ENCODE measurements at regions of chr5 and their contacts with region 1.

Region 1: DNA sequence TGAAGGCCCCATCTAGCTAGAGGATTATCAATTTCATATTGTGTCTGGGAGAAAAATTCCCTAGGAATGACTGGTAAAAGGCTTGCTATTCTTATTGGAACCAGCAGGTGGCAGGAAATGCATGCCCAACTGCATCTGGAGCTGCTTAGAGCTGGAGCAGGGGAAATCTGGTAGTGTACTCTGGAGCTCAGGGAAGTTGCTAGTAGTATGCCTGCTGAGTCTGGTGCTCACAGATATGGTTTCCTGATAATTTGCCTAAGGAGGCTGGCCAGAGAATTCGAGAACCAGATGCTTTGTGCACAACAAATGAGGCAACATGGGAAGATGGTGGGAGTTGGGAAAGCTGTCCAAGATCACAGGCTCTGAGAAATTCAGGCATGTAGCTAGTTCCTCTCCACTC is 53.7 kb downstream of the G3BP1 start:
- DNase-seq: peak; percentile 50
- ATAC-seq: no peak
- H3K4me3 Mint-ChIP-seq: no peak overlapping the region
- H3K27ac Mint-ChIP-seq: no peak overlapping the region
- H3K4me1 Mint-ChIP-seq: no peaks in the 10 kb centered on the region
- H3K27me3 Mint-ChIP-seq: no peaks in the 10 kb centered on the region

Region 2: DNA sequence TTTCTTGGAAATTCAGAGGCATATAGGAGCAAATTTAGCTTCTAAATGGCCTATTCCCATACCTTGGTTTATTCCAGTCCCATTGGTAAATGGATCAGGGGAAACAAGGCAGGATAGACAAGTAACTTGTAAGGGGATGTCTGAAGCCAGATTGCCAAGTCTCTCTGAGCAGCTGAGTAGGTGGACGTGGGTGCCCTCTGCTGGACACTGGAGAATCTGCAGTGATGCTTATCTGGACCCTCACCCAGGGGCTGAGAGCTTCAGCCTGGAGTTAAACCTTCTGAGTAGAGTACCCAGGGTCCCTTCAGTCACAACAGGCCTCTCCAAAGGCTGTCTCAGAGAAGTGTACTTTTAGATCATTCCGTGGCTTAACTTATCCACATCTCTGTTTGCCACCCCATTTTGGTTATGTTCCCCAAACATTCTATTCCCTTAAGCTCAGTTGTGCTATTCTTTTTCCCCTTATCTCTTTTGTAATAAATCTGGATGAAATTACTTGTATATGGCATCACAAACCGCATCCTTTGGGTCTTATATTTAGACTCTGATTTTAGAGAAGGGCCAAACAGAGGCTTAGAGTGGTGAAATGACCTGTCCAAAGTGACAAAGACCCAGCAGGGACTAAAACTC is 317.5 kb after region 1 on chr5:
- CTCF ChIA-PET with region 1: interaction called, 120 read pairs
- POLR2A ChIA-PET with region 1: no interaction called
- DNase-seq: peak; percentile 71
- ATAC-seq: peak; percentile 69
- H3K4me3 Mint-ChIP-seq: no peak overlapping the region
- H3K27ac Mint-ChIP-seq: no peak overlapping the region
- H3K4me1 Mint-ChIP-seq: no peaks in the 10 kb centered on the region
- H3K27me3 Mint-ChIP-seq: peaks cover 4% of the 10 kb centered on the region

Measured in activated CD8-positive, alpha-beta T cell treated with anti-CD3 and anti-CD28 coated beads, Interleukin-2, amount 10 ng/mL, durations not matched to agents 7 days and 5 days (primary cell).